CD4-positive, alpha-beta T cell (primary cell): ENCODE measurements at regions of chr1 and their contacts with region 1.

Region 1: DNA sequence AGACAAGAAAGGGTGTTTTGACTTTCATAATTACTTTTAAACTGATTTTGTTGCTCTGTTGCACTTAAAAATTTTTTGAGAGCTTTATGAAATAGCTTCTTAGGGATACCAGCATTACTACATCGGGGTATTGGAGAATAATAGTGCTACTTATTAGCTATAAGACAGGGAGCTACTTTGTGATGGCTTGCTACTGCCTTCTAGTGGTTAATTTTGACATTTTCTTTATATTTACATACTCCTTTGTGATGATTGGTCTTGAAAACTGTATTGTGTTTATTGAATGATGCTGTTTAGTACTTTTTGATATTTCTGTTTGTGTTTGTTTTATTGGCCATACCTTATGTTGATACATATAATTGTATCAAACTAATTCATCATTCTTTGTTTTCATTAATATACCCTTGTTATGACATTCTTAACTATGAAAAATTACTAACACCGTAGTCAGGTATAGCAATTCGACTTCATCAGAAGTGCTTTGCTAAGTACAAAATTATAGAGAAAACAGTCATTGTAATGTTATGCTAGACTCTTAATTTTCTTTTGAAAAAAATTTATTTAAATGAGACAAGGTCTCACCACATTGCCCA is 85.5 kb downstream of the CLIC4 start:
- DNase-seq: peak in 3 of 14 experiments; percentile 65 to 75 (median 73)
- ATAC-seq: peak; percentile 44
- H3K4me3 ChIP-seq: no peak overlapping the region
- H3K4me3 Mint-ChIP-seq: no peak overlapping the region
- H3K27ac ChIP-seq: no peak overlapping the region
- H3K27ac Mint-ChIP-seq: no peak overlapping the region
- H3K4me1 ChIP-seq: no peaks in the 10 kb centered on the region
- H3K4me1 Mint-ChIP-seq: no peaks in the 10 kb centered on the region
- H3K27me3 ChIP-seq: no peaks in the 10 kb centered on the region
- H3K27me3 Mint-ChIP-seq: peaks cover 5% of the 10 kb centered on the region
- CTCF ChIP-seq: peak; percentile 91

Region 2: DNA sequence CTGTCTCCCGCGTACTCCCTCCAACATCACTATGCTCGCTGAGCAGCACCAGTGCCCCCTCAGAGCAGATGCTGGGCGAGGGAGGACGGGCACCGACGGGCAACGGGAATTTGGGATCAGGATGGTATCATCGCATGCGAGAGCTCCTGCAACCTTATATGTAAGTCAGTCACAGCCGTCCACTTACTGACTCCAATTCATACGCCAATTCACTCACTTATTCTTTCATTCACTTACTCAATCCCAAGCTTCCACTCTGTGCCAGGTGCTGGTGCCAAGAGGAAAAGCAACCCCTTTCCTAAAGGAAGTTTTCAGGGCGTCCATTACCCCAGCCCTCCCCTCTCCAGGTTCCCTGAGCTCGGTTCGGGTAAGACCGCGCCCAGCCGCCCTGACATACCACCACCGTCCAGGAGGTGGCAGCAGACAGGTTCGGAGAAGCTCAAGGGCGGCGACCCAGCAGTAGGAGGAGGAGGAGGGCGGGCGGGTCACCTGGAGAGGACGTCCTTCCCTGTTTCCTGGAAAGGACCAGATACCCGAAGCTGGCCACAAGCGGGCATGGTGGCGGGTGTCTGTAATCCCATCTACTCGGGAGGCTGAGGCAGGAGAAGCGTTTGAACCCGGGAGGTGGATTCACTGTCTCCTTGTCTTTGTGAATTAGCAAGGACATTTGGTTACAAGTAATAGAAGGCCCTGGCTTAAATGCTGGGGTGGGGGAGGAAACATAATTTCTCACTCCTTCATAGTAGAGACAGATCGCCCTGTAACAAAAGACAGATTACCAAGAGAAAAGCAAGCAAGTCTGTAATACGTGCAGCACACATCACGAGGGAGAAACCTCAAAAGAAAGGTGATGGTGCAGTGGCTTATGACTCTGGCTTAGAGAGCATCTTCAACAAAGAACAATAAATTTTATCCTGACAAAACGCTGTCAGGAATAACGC is 680.3 kb before region 1 on chr1:
- CTCF ChIA-PET with region 1: interaction called, 14 read pairs
- POLR2A ChIA-PET with region 1: no interaction called
- intact Hi-C with region 1: no loop called
- DNase-seq: peak; percentile 76 to 91 (median 87)
- ATAC-seq: peak; percentile 98
- H3K4me3 ChIP-seq: peak overlapping the region; percentile 31
- H3K4me3 Mint-ChIP-seq: peak overlapping the region; percentile 44
- H3K27ac ChIP-seq: no peak overlapping the region
- H3K27ac Mint-ChIP-seq: no peak overlapping the region
- H3K4me1 ChIP-seq: peaks cover 12% of the 10 kb centered on the region
- H3K4me1 Mint-ChIP-seq: peaks cover 11% of the 10 kb centered on the region
- H3K27me3 ChIP-seq: peaks cover 11 to 23% of the 10 kb centered on the region in 2 experiments
- H3K27me3 Mint-ChIP-seq: peaks cover 46% of the 10 kb centered on the region
- CTCF ChIP-seq: peak; percentile 87

Region 3: GRCh38 chr1:24385160-24385940 is 445.4 kb before region 1 on chr1:
- CTCF ChIA-PET with region 1: no interaction called
- POLR2A ChIA-PET with region 1: no interaction called
- intact Hi-C with region 1: loop called (anchors 5 to 10 kb)
- DNase-seq: peak in 10 of 14 experiments; percentile 14 to 62 (median 28)
- ATAC-seq: peak; percentile 79
- H3K4me3 ChIP-seq: no peak overlapping the region
- H3K4me3 Mint-ChIP-seq: no peak overlapping the region
- H3K27ac ChIP-seq: no peak overlapping the region
- H3K27ac Mint-ChIP-seq: no peak overlapping the region
- H3K4me1 ChIP-seq: peaks cover 27% of the 10 kb centered on the region
- H3K4me1 Mint-ChIP-seq: peaks cover 5% of the 10 kb centered on the region
- H3K27me3 ChIP-seq: no peaks in the 10 kb centered on the region
- H3K27me3 Mint-ChIP-seq: no peaks in the 10 kb centered on the region
- CTCF ChIP-seq: peak; percentile 32

Region 4: GRCh38 chr1:24688621-24689195 is 142.1 kb before region 1 on chr1:
- CTCF ChIA-PET with region 1: interaction called, 58 read pairs
- POLR2A ChIA-PET with region 1: interaction called, 13 read pairs
- intact Hi-C with region 1: loop called (anchors 2 kb)
- DNase-seq: peak; percentile 26 to 76 (median 49)
- ATAC-seq: peak; percentile 65
- H3K4me3 ChIP-seq: no peak overlapping the region
- H3K4me3 Mint-ChIP-seq: no peak overlapping the region
- H3K27ac ChIP-seq: no peak overlapping the region
- H3K27ac Mint-ChIP-seq: no peak overlapping the region
- H3K4me1 ChIP-seq: no peaks in the 10 kb centered on the region
- H3K4me1 Mint-ChIP-seq: no peaks in the 10 kb centered on the region
- H3K27me3 ChIP-seq: no peaks in the 10 kb centered on the region
- H3K27me3 Mint-ChIP-seq: no peaks in the 10 kb centered on the region
- CTCF ChIP-seq: peak; percentile 87